CD4-positive, alpha-beta T cell (primary cell): ENCODE measurements at regions of chr5 and their contacts with region 1.

Region 1: GRCh38 chr5:56814963-56815658 is at the start of gene MAP3K1:
- DNase-seq: peak; percentile 69 to 94 (median 80)
- ATAC-seq: peak; percentile 71
- H3K4me3 ChIP-seq: peak within 1 kb of the TSS; percentile 66
- H3K4me3 Mint-ChIP-seq: peak within 1 kb of the TSS; percentile 99
- H3K27ac ChIP-seq: peak within 1 kb of the TSS; percentile 78 to 82
- H3K27ac Mint-ChIP-seq: peak within 1 kb of the TSS; percentile 97
- H3K4me1 ChIP-seq: peaks cover 10% of the 10 kb centered on the region
- H3K4me1 Mint-ChIP-seq: peaks cover 43% of the 10 kb centered on the region
- H3K27me3 ChIP-seq: no peaks in the 10 kb centered on the region
- H3K27me3 Mint-ChIP-seq: no peaks in the 10 kb centered on the region
- CTCF ChIP-seq: no peak
- total RNA-seq, gene MAP3K1: 59.4 to 62.5 TPM

Region 2: GRCh38 chr5:56481428-56482357 is 333.4 kb before region 1 on chr5:
- CTCF ChIA-PET with region 1: interaction called, 4 read pairs
- POLR2A ChIA-PET with region 1: interaction called, 25 read pairs
- intact Hi-C with region 1: loop called (anchors 5 kb)
- DNase-seq: peak in 9 of 14 experiments; percentile 8 to 58 (median 31)
- ATAC-seq: no peak
- H3K4me3 ChIP-seq: peak overlapping the region; percentile 69
- H3K4me3 Mint-ChIP-seq: peak overlapping the region; percentile 94
- H3K27ac ChIP-seq: peak overlapping the region; percentile 80
- H3K27ac Mint-ChIP-seq: peak overlapping the region; percentile 89
- H3K4me1 ChIP-seq: peaks cover 52% of the 10 kb centered on the region
- H3K4me1 Mint-ChIP-seq: peaks cover 49% of the 10 kb centered on the region
- H3K27me3 ChIP-seq: no peaks in the 10 kb centered on the region
- H3K27me3 Mint-ChIP-seq: no peaks in the 10 kb centered on the region
- CTCF ChIP-seq: peak; percentile 46

Region 3: DNA sequence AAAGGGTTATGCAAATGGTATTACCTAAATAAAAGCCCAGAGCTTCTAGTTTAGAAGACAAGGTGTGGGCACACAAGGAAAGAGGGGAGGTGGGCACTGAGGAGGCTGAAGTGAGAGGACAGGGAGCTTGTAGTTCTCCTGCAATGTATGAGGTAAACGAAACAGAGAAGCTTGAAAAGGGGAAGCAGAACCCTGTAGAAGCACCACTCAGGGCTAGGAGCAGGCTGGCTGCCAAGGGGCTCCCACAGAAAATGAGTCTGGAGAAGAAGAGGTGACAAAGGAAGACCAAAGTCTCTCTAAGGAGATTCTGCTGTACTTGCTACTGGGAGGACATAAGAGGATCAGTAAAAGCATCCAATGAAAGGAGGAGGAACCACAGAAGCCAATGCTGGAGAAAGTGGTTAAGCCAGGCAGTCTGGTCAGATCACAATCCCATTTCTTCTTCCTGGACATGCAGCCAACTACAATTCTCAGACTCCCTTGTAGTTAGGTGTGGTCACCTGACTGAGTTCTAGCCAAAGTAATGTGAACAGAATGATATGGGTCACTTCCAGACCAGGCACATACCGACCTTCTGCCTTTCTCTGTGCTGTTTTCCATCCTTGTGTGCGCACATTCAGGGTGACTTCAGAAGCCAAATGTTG is 174.2 kb before region 1 on chr5:
- CTCF ChIA-PET with region 1: no interaction called
- POLR2A ChIA-PET with region 1: no interaction called
- intact Hi-C with region 1: loop called in 1 of 2 experiments (anchors 10 kb)
- DNase-seq: peak in 2 of 14 experiments; percentile 26 to 30
- ATAC-seq: no peak
- H3K4me3 ChIP-seq: no peak overlapping the region
- H3K4me3 Mint-ChIP-seq: no peak overlapping the region
- H3K27ac ChIP-seq: no peak overlapping the region
- H3K27ac Mint-ChIP-seq: peak overlapping the region; percentile 97
- H3K4me1 ChIP-seq: peaks cover 6% of the 10 kb centered on the region
- H3K4me1 Mint-ChIP-seq: peaks cover 52% of the 10 kb centered on the region
- H3K27me3 ChIP-seq: no peaks in the 10 kb centered on the region
- H3K27me3 Mint-ChIP-seq: no peaks in the 10 kb centered on the region
- CTCF ChIP-seq: no peak

Region 4: DNA sequence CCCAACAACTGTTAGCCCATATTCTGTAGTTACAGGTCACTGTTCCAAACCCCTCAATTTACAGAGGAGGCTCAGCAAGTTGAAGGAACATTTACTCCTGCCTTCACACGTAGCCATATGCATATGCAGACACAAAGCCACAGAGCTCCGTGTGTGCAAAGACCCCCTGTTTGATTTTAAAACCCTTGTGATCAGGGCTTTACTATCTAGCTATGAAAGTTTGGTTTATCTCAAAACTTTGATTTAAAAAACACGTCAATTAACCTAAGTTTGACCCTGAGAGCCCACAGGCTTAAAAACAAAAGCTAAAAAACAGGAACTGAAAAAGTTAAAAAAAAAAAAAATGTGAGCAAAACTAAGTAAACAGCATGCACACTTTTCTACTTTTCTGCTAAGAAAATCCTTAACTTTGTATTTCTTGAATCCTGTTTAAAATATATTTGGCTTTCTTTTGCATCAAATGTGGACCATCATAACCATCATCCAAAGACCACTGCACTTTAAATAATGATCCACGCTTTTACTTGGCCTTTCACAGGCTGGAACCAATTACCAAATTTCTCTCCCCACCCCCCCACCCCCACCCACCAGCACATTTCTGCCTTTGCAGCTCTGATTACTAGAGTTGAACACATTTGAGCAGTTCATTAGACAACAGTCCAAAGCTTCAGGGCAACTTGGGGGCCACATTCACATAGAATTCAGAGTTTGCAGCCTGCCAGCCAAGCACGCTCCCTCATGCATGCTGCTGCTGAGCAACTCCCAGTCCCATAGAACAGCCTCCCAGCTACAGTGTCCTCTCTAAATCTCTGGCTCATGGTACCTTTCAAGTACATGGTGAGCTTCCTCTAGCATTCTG is 128.5 kb before region 1 on chr5:
- CTCF ChIA-PET with region 1: no interaction called
- POLR2A ChIA-PET with region 1: interaction called, 45 read pairs
- intact Hi-C with region 1: loop called (anchors 5 kb)
- DNase-seq: peak in 2 of 14 experiments; percentile 22 to 59
- ATAC-seq: peak; percentile 65
- H3K4me3 ChIP-seq: no peak overlapping the region
- H3K4me3 Mint-ChIP-seq: peak overlapping the region; percentile 61
- H3K27ac ChIP-seq: peak overlapping the region in 1 of 2 donors; percentile 30
- H3K27ac Mint-ChIP-seq: peak overlapping the region; percentile 82
- H3K4me1 ChIP-seq: peaks cover 64% of the 10 kb centered on the region
- H3K4me1 Mint-ChIP-seq: peaks cover 100% of the 10 kb centered on the region
- H3K27me3 ChIP-seq: no peaks in the 10 kb centered on the region
- H3K27me3 Mint-ChIP-seq: no peaks in the 10 kb centered on the region
- CTCF ChIP-seq: no peak

Region 5: DNA sequence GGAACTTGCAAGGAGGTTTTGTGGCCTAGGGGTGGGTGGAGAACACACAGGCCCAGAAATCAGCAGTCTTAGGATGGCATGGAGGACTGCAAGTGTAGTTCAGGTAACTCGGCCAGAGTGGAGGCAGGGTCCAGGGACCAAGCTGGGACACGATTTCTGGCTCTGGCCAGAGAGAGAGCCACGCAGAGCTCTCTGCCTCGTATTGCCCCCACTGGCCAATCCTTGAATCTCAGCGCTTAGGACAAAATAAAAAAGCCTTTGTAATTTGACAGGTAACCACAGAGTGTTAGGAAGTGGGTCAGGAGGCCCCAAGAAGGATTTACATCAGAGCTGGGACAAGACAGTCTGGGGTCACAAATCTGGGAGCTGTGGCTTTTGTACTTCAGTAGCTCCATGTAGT is 11.9 kb after region 1 on chr5:
- CTCF ChIA-PET with region 1: interaction called, 4 read pairs
- POLR2A ChIA-PET with region 1: interaction called, 10 read pairs
- intact Hi-C with region 1: loop called in 1 of 2 experiments (anchors 1 kb)
- DNase-seq: peak in 3 of 14 experiments; percentile 51 to 62 (median 53)
- ATAC-seq: peak; percentile 27
- H3K4me3 ChIP-seq: no peak overlapping the region
- H3K4me3 Mint-ChIP-seq: peak overlapping the region; percentile 54
- H3K27ac ChIP-seq: no peak overlapping the region
- H3K27ac Mint-ChIP-seq: peak overlapping the region; percentile 94
- H3K4me1 ChIP-seq: peaks cover 70% of the 10 kb centered on the region
- H3K4me1 Mint-ChIP-seq: peaks cover 97% of the 10 kb centered on the region
- H3K27me3 ChIP-seq: no peaks in the 10 kb centered on the region
- H3K27me3 Mint-ChIP-seq: no peaks in the 10 kb centered on the region
- CTCF ChIP-seq: peak; percentile 14

Region 6: DNA sequence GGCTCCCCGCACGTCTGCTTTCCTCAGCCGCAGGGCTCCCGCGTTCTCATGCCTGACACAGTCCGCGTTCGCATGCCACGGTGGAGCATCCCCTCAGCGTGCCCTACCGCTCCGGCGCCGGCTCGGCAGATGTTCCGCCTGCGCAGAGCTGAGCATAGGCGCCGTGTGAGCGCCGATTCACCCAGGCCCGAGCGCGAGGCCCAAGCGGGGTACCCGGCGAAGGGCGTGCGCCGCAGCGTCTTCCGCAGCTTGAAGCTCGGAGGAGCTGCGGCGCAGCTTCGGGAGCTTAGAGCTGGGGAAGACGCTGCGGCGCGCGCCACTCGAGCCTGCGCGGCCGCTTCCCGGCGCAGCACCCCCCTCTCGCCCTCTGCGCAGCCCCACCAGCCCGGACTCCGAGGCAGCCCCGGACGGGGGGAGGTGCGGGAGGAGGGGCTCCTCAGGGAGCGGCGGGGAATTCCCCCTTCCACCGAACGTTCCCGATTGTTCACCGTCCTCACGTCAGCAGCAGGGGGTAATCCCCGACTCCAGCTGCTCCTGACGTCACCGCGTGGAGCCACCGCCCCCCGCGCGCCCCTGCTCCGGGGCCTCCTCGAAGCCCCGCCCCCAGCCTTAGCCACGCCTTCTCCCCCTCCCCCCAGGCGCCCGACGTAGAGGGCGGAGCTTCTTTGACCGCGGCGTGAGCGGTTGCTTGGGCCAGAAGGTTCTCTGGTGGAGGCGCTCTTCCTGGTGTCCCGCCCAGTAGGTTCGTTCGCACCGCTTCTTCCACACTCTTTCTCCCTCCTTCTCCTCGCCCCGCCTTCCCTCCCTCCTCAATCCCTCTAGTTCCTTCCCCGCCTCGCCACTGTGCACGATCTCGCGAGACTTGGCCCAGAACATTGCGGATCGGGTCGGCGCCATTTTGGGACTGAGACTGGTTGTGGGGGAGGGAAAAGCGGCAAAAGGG is 358.3 kb after region 1 on chr5 and contains the start of gene GPBP1:
- CTCF ChIA-PET with region 1: no interaction called
- POLR2A ChIA-PET with region 1: interaction called, 5 read pairs
- intact Hi-C with region 1: loop called (anchors 5 kb)
- DNase-seq: peak; percentile 94 to 100 (median 97)
- ATAC-seq: peak; percentile 70
- H3K4me3 ChIP-seq: peak within 1 kb of the TSS; percentile 91
- H3K4me3 Mint-ChIP-seq: peak within 1 kb of the TSS; percentile 98
- H3K27ac ChIP-seq: peak within 1 kb of the TSS; percentile 100
- H3K27ac Mint-ChIP-seq: peak within 1 kb of the TSS; percentile 96
- H3K4me1 ChIP-seq: peaks cover 19% of the 10 kb centered on the region
- H3K4me1 Mint-ChIP-seq: peaks cover 41% of the 10 kb centered on the region
- H3K27me3 ChIP-seq: no peaks in the 10 kb centered on the region
- H3K27me3 Mint-ChIP-seq: no peaks in the 10 kb centered on the region
- CTCF ChIP-seq: no peak
- total RNA-seq, gene GPBP1: 136 to 137 TPM

Region 7: GRCh38 chr5:58366461-58366860 is 1551.3 kb after region 1 on chr5:
- CTCF ChIA-PET with region 1: no interaction called
- POLR2A ChIA-PET with region 1: no interaction called
- intact Hi-C with region 1: no loop called
- DNase-seq: no peak
- ATAC-seq: no peak
- H3K4me3 ChIP-seq: no peak overlapping the region
- H3K4me3 Mint-ChIP-seq: no peak overlapping the region
- H3K27ac ChIP-seq: no peak overlapping the region
- H3K27ac Mint-ChIP-seq: no peak overlapping the region
- H3K4me1 ChIP-seq: no peaks in the 10 kb centered on the region
- H3K4me1 Mint-ChIP-seq: no peaks in the 10 kb centered on the region
- H3K27me3 ChIP-seq: no peaks in the 10 kb centered on the region
- H3K27me3 Mint-ChIP-seq: no peaks in the 10 kb centered on the region
- CTCF ChIP-seq: no peak